Colonic mucosa (tissue), 4 donors: ENCODE measurements at regions of chr4 and their contacts with region 1.

Region 1: GRCh38 chr4:106258145-106259045 is 57.6 kb downstream of the TBCK start:
- DNase-seq: no peak
- H3K4me3 ChIP-seq: no peak overlapping the region
- H3K27ac ChIP-seq: no peak overlapping the region
- H3K4me1 ChIP-seq: no peaks in the 10 kb centered on the region
- H3K27me3 ChIP-seq: no peaks in the 10 kb centered on the region
- CTCF ChIP-seq: no peak

Region 2: DNA sequence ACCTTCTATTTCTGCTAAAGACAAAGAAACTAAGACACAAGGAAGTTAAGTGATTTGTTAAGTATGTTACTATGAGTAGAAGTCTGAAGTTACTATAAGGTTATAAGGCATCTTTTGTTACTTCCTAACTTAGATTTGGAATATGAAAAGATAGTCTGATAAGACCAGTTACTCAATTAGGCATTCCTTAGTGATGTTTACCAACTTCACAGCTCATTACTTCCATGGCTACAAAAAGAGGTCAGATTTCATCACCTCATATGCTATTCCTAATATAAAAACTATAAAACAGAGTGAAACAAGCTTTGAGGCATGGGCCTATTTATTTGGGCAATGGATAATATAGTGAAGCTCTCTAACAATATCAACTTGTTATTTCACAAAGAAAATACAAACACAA is 85.5 kb before region 1 on chr4:
- intact Hi-C with region 1: no loop called
- DNase-seq: no peak
- H3K4me3 ChIP-seq: no peak overlapping the region
- H3K27ac ChIP-seq: no peak overlapping the region
- H3K4me1 ChIP-seq: no peaks in the 10 kb centered on the region
- H3K27me3 ChIP-seq: no peaks in the 10 kb centered on the region
- CTCF ChIP-seq: no peak

Region 3: DNA sequence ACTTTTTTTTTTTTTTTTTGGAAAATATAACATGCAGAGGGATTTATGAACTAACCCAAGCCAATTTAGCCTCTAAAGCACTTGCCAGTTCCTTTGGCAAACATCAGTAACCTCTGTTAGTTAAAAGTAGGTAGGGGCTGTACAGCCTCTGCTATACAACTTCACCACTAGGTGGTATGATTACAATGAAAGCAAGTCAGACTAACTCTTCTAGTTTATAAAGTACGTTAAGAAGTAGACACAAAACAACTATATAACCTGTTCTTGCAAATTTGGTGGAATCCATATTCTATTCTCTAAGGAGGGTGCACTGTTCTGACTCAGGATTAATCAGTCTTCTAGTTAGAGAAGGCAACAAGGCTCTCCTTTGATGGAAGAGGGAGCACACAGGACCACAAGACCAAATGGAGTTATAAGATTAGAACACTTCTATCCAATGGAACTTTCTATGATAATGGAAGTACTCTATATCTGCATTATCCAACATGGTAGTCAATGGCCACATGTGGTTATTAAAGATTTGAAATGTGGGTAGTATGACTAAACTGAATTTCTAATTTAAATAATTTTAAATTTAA is 70.7 kb after region 1 on chr4:
- intact Hi-C with region 1: loop called (anchors 10 kb)
- DNase-seq: no peak
- H3K4me3 ChIP-seq: no peak overlapping the region
- H3K27ac ChIP-seq: no peak overlapping the region
- H3K4me1 ChIP-seq: no peaks in the 10 kb centered on the region
- H3K27me3 ChIP-seq: no peaks in the 10 kb centered on the region
- CTCF ChIP-seq: peak; percentile 54